Panc1 (cell line): ENCODE measurements at regions of chr10 and their contacts with region 1.

Region 1: DNA sequence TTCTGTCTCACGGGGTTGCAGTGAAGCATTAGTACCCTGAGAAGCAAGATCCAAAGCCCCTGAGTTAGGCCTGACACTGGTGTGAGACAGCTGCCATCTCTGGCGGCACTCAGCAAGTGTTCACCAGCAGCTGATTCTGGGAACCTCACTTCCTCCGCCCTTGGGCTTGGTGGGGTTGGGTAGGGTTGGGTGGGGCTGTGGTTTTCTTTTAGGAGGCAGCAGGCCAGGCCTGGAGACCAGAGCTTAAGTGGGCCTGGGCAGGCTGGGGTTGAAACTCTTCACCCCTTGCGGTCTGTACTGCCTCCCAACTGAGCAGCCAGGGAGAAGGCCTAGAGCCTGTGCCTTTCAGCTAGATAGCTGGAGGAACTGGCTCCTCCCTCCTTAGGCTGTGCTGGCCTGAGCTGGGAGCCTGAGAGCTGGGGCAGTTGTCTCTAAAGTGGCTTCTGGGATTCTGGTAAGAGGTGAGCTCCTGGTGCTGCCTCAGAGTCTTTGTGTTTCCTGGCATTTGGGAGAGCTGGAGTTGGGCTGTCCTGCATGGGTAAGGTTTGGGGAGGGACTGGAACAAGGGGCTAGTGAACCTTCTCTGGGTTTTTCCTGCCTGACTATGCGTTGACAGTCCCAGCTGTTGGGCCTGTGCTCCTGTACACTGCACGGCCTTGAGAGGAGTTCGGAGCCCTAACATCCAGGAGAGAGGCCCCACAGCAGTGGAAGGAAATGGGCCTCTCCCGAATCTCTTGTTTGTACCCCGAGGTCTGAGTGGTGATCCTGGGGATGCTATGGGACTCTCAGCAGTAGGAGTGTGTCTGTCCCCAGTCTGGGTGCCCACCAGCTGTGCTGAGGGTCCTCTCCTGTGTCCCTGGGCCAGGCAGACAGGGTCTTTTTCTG is 5.2 kb downstream of the TSPAN14 start:
- DNase-seq: no peak
- ATAC-seq: no peak
- H3K4me3 ChIP-seq: no peak overlapping the region
- H3K27ac ChIP-seq: no peak overlapping the region
- H3K4me1 ChIP-seq: peaks cover 34% of the 10 kb centered on the region
- H3K27me3 ChIP-seq: no peaks in the 10 kb centered on the region
- CTCF ChIP-seq: no peak

Region 2: DNA sequence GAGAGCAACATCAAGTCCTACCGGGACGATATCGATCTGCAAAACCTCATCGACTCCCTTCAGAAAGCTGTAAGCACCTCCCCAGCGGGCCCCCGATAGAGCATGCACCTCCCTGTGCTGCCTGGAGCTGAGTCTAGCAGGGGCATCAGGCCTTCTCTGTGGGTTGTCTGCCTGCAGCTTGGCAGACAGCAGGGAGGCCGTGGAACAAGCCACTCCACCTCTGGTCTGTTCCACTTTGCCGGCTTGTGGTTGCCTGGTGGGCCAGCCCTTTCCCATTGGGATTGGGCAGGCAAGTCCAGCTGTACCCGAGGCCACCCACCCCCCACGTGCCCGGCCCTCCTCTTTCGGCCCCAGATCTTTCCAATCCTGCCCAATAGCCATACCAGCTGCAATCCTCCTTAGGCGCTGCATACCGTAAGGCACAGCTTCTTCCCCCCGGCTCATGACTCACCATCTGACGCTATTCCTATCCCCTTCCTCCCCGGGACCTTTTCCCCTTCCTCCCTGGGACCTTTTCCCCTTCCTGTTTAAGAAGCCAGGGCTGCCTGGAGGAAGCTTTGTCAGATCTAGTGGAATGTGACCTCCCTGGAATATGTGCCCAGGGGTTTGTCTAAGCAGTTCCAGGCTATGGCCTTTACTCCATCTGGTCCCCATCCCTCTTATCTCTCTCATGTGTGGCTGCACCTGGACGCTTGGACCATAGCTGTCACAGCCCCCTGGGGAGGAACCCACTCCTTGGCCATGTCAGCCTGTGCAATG is 50.3 kb after region 1 on chr10:
- CTCF ChIA-PET with region 1: interaction called, 17 read pairs
- POLR2A ChIA-PET with region 1: no interaction called
- in situ Hi-C with region 1: no loop called
- intact Hi-C with region 1: no loop called
- DNase-seq: no peak
- ATAC-seq: no peak
- H3K4me3 ChIP-seq: no peak overlapping the region
- H3K27ac ChIP-seq: no peak overlapping the region
- H3K4me1 ChIP-seq: no peaks in the 10 kb centered on the region
- H3K27me3 ChIP-seq: no peaks in the 10 kb centered on the region
- CTCF ChIP-seq: no peak